CD4-positive, alpha-beta T cell (primary cell): ENCODE measurements at regions of chr1 and their contacts with region 1.

Region 1: DNA sequence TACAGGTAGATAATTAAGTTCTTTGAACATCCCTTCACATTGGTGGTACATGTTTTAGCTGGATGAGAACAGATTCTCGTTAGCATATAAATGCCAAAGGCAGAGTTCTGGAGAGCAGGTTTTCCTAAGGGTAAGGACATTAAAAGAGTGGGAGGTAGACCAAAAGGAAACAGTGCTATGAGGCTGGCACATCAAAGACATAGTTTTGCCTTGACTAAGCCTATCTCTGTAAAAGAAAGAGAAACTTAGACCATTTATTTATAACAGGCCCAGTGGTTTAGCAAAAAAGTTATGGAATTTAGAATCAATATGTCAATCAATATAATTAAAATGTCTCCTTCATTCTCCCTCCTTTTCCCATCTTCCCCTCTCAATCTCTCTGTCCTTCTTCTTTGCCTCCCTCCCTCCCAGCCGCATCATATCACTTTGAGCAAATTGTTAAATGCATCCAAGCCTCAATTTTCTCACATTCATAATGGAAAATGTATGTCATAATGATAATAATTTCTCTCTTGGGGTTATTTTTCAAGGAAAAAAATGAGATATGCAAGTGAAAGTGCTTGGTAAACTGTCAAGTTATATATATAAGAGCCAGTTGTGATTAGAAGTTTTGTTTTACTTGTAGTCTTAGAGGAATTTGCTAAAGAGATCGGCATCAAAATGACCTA is 209.9 kb upstream of the SGIP1 start:
- DNase-seq: no peak
- ATAC-seq: no peak
- H3K4me3 ChIP-seq: no peak overlapping the region
- H3K4me3 Mint-ChIP-seq: no peak overlapping the region
- H3K27ac ChIP-seq: no peak overlapping the region
- H3K27ac Mint-ChIP-seq: no peak overlapping the region
- H3K4me1 ChIP-seq: peaks cover 11% of the 10 kb centered on the region
- H3K4me1 Mint-ChIP-seq: peaks cover 57% of the 10 kb centered on the region
- H3K27me3 ChIP-seq: no peaks in the 10 kb centered on the region
- H3K27me3 Mint-ChIP-seq: no peaks in the 10 kb centered on the region
- CTCF ChIP-seq: no peak

Region 2: GRCh38 chr1:66168467-66168887 is 155.6 kb before region 1 on chr1:
- CTCF ChIA-PET with region 1: no interaction called
- POLR2A ChIA-PET with region 1: no interaction called
- intact Hi-C with region 1: no loop called
- DNase-seq: no peak
- ATAC-seq: no peak
- H3K4me3 ChIP-seq: no peak overlapping the region
- H3K4me3 Mint-ChIP-seq: no peak overlapping the region
- H3K27ac ChIP-seq: no peak overlapping the region
- H3K27ac Mint-ChIP-seq: no peak overlapping the region
- H3K4me1 ChIP-seq: no peaks in the 10 kb centered on the region
- H3K4me1 Mint-ChIP-seq: peaks cover 15% of the 10 kb centered on the region
- H3K27me3 ChIP-seq: no peaks in the 10 kb centered on the region
- H3K27me3 Mint-ChIP-seq: peaks cover 12% of the 10 kb centered on the region
- CTCF ChIP-seq: no peak

Region 3: DNA sequence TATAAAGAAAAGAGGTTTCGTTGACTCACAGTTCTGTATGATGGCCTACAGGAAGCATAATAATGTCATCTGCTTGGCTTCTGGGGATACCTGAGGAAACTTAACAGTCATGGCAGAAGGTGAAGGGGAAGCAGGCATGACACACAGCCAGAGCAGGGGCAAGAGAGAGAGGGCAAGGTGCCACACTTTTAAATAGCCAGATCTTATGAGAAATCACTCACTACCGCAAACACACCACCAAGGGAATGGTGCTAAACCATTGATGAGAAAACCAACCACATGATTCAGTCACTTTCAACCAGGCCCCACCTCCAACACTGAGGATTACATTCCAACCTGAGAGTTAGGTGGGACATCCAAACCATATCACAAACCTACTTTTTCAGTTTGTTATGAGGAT is 36.0 kb before region 1 on chr1:
- CTCF ChIA-PET with region 1: interaction called, 5 read pairs
- POLR2A ChIA-PET with region 1: interaction called, 3 read pairs
- intact Hi-C with region 1: loop called in 1 of 2 experiments (anchors 5 kb)
- DNase-seq: no peak
- ATAC-seq: no peak
- H3K4me3 ChIP-seq: no peak overlapping the region
- H3K4me3 Mint-ChIP-seq: no peak overlapping the region
- H3K27ac ChIP-seq: no peak overlapping the region
- H3K27ac Mint-ChIP-seq: no peak overlapping the region
- H3K4me1 ChIP-seq: peaks cover 19% of the 10 kb centered on the region
- H3K4me1 Mint-ChIP-seq: peaks cover 66% of the 10 kb centered on the region
- H3K27me3 ChIP-seq: no peaks in the 10 kb centered on the region
- H3K27me3 Mint-ChIP-seq: no peaks in the 10 kb centered on the region
- CTCF ChIP-seq: no peak